OCI-LY7 (cell line): ENCODE measurements at regions of chr19 and their contacts with region 1.

Region 1: DNA sequence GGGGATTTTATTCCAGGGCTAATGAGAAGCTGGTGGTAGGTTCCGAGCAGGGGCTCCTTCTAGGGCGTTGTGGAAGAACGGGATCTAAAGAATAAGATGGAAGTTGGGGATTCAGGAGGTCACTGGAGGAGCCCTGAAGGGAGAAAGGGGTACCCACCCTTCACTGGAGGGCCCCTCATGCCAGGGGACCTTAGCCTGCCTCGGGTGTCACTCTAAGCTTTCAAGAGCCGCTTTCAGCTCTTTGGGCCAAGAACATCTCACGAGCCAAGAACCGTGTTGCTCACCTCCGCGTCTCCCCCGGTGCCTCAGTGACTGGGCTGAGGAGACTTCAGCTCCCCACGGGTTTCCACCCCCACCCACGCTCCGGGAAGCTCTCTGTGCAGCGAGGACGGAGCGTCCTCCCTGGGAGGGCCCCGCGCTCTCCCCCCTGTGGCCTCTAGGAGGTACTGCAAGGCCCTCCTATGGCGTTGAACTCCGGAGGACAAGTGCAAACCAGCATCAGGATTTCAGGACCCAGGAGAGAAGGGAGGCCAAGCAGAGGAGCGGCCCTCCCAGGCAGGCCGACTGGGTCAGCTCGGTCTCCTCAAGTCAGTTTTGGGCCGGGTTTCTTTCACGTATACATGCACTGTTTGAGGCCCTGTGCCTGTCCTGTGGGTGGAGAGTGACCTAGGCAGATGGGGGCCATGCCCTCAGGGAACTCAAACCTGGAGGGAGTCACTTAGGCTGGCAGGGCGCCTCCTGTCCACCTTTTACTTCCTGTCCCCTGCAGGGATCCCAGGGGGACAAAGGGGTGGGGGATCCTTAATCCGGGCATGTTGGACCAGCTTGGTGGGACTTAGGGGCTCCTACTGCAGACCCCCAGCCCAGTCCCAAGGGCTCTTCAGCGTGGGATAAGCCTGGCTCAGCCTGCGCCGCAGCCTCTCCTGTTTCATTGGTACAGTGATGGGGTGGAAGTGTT is 5.1 kb upstream of the KRTDAP start:
- DNase-seq: peak; percentile 77
- H3K4me3 ChIP-seq: no peak overlapping the region
- H3K27ac ChIP-seq: no peak overlapping the region
- H3K4me1 ChIP-seq: no peaks in the 10 kb centered on the region
- CTCF ChIP-seq: peak; percentile 89

Region 2: GRCh38 chr19:35352448-35353304 is 142.7 kb before region 1 on chr19:
- CTCF ChIA-PET with region 1: interaction called, 3 read pairs
- POLR2A ChIA-PET with region 1: interaction called, 3 read pairs
- intact Hi-C with region 1: loop called (anchors 1 kb)
- DNase-seq: peak; percentile 78
- H3K4me3 ChIP-seq: no peak overlapping the region
- H3K27ac ChIP-seq: peak overlapping the region; percentile 27
- H3K4me1 ChIP-seq: peaks cover 54% of the 10 kb centered on the region
- CTCF ChIP-seq: peak; percentile 92